ENCODE measurements at regions of chr10 and their contacts with region 1.

Region 1: GRCh38 chr10:70267161-70267933 is 16.5 kb downstream of the NPFFR1 start:
- H3K4me3 ChIP-seq: no peak overlapping the region
- H3K27ac ChIP-seq: no peak overlapping the region
- H3K4me1 ChIP-seq: no peaks in the 10 kb centered on the region
- CTCF ChIP-seq: no peak

Region 2: GRCh38 chr10:70255329-70256299 is 11.7 kb before region 1 on chr10:
- CTCF ChIA-PET with region 1: interaction called, 17 read pairs
- POLR2A ChIA-PET with region 1: interaction called, 6 read pairs
- H3K4me3 ChIP-seq: no peak overlapping the region
- H3K27ac ChIP-seq: no peak overlapping the region
- H3K4me1 ChIP-seq: no peaks in the 10 kb centered on the region
- CTCF ChIP-seq: no peak

Region 3: GRCh38 chr10:70348228-70348850 is 81.0 kb after region 1 on chr10:
- CTCF ChIA-PET with region 1: interaction called, 29 read pairs
- POLR2A ChIA-PET with region 1: no interaction called
- H3K4me3 ChIP-seq: no peak overlapping the region
- H3K27ac ChIP-seq: no peak overlapping the region
- H3K4me1 ChIP-seq: no peaks in the 10 kb centered on the region
- CTCF ChIP-seq: 0 out of 2 replicates have a peak, but pooled peaks have one; percentile 29

Measured in HEK293 (cell line).